ENCODE measurements at regions of chr1 and their contacts with region 1.

Region 1: GRCh38 chr1:161885003-161885402 is 118.9 kb downstream of the ATF6 start:
- DNase-seq: peak; percentile 75
- ATAC-seq: peak; percentile 85
- H3K4me3 ChIP-seq: peak overlapping the region; percentile 42
- H3K27ac ChIP-seq: peak overlapping the region; percentile 21
- H3K4me1 ChIP-seq: peaks cover 23% of the 10 kb centered on the region
- H3K27me3 ChIP-seq: no peaks in the 10 kb centered on the region
- CTCF ChIP-seq: no peak

Region 2: DNA sequence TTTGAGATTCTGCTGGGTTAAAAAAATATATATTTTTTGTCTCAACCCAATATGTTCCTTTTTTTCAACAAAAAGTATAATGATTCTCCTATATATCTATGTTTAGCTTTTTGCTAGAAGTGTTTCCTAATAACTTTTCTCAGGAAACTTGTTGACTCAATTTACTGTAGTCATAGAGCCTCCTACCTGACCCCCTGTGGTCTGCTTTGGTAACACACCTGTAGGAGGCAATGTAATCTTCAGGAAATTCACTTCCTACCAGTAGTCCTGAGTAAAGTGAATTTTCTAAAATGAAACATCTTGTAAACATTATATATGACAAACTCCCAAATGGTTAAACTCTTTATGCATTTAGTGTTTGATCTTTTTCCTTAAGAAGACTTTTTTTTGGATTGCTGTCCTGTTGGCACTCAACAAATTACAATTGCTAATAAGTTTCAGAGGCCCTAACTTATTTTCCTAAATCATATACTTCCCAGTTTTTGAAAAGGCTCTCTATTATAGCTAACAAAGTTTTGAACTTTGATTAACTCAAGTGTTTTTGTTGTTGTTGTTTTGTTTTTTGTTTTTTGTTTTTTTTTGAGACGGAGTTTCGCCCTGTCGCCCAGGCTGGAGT is 20.4 kb after region 1 on chr1:
- CTCF ChIA-PET with region 1: no interaction called
- POLR2A ChIA-PET with region 1: no interaction called
- intact Hi-C with region 1: no loop called
- DNase-seq: peak; percentile 74
- ATAC-seq: peak; percentile 40; the same call in 1 of the 2 replicates
- H3K4me3 ChIP-seq: no peak overlapping the region
- H3K27ac ChIP-seq: no peak overlapping the region
- H3K4me1 ChIP-seq: peaks cover 12% of the 10 kb centered on the region
- H3K27me3 ChIP-seq: no peaks in the 10 kb centered on the region
- CTCF ChIP-seq: peak; percentile 87

Region 3: GRCh38 chr1:162035241-162035640 is 150.2 kb after region 1 on chr1:
- CTCF ChIA-PET with region 1: interaction called, 9 read pairs
- POLR2A ChIA-PET with region 1: interaction called, 4 read pairs
- intact Hi-C with region 1: loop called (anchors 5 kb)
- DNase-seq: peak; percentile 72
- ATAC-seq: peak; percentile 29
- H3K4me3 ChIP-seq: no peak overlapping the region
- H3K27ac ChIP-seq: no peak overlapping the region
- H3K4me1 ChIP-seq: peaks cover 24% of the 10 kb centered on the region
- H3K27me3 ChIP-seq: no peaks in the 10 kb centered on the region
- CTCF ChIP-seq: no peak

Measured in PC-3 (cell line).